ENCODE measurements at regions of chr14 and their contacts with region 1.

Region 1: GRCh38 chr14:73728717-73729330 is 14.6 kb upstream of the PNMA1 start:
- DNase-seq: peak; percentile 91 to 94 (median 91)
- H3K4me3 ChIP-seq: no peak overlapping the region
- H3K4me3 Mint-ChIP-seq: peak overlapping the region; percentile 20 to 69
- H3K27ac ChIP-seq: peak overlapping the region; percentile 22 to 35
- H3K27ac Mint-ChIP-seq: peak overlapping the region; percentile 75 to 93 (median 88)
- H3K4me1 ChIP-seq: peaks cover 39 to 51% of the 10 kb centered on the region in 2 donors
- H3K4me1 Mint-ChIP-seq: peaks cover 44% of the 10 kb centered on the region
- H3K27me3 ChIP-seq: no peaks in the 10 kb centered on the region
- H3K27me3 Mint-ChIP-seq: peaks cover 0 to 2% (median 0%) of the 10 kb centered on the region in 3 donors
- CTCF ChIP-seq: peak; percentile 93

Region 2: DNA sequence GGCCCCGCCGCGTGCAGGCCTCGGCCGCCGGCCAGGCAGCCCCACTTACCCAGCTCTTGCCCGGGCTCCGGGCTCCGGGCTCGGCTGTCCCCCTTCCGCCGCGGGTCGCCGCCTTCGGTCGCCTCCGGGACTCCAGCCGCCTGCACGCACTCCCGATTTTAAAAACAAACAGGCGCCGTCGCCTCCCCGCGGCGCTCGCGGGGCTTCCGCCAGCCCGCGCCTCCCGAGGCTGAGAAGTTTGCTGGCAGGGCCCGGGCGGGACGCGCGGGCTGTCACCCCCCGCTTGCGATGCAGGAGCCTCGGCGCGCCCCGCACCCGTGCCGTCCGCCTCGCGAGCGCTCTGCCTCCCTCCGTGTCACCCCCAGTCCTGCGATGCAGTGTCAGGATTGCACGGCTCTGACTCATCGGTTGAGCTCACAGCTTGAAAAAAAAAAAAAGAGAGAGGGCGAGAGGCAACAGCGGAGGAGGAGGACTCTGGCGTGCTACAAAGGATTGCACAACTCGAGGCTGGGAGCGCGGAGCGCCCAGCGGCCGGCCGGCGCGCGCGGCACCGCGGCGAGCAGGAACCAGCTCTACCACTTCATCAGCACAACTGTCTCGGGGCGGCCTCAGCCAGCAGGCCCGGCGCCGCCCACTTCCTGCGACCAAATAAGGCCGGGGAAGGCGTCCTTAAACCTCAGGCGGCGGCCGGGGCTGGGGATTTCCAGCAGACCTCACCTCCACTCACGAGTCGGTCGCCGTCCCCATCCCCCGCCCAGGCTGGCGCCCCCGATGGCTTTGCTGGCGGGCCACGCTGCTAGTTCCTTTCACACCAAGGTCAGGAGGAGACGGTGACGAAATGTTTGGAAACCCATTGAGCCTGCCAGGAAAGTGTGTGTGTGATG is 31.1 kb after region 1 on chr14:
- intact Hi-C with region 1: loop called in 1 of 2 experiments (anchors 5 kb)
- DNase-seq: peak; percentile 97 to 99 (median 98)
- H3K4me3 ChIP-seq: peak overlapping the region; percentile 25 to 77 (median 74)
- H3K4me3 Mint-ChIP-seq: peak overlapping the region; percentile 77 to 86
- H3K27ac ChIP-seq: peak overlapping the region; percentile 90 to 98
- H3K27ac Mint-ChIP-seq: peak overlapping the region; percentile 96 to 99 (median 98)
- H3K4me1 ChIP-seq: peaks cover 82 to 90% of the 10 kb centered on the region in 2 donors
- H3K4me1 Mint-ChIP-seq: peaks cover 83% of the 10 kb centered on the region
- H3K27me3 ChIP-seq: no peaks in the 10 kb centered on the region
- H3K27me3 Mint-ChIP-seq: peaks cover 0 to 2% (median 0%) of the 10 kb centered on the region in 3 donors
- CTCF ChIP-seq: no peak

Region 3: GRCh38 chr14:73886449-73887317 is 157.9 kb after region 1 on chr14 and contains the start of gene ZNF410:
- intact Hi-C with region 1: loop called in 1 of 2 experiments (anchors 2 kb)
- DNase-seq: peak; percentile 94 to 97 (median 95)
- H3K4me3 ChIP-seq: peak within 1 kb of the TSS; percentile 54 to 90 (median 73)
- H3K4me3 Mint-ChIP-seq: peak within 1 kb of the TSS; percentile 88 to 93
- H3K27ac ChIP-seq: peak within 1 kb of the TSS; percentile 89 to 94
- H3K27ac Mint-ChIP-seq: peak within 1 kb of the TSS; percentile 94 to 98 (median 97)
- H3K4me1 ChIP-seq: peaks cover 19 to 25% of the 10 kb centered on the region in 2 donors
- H3K4me1 Mint-ChIP-seq: peaks cover 31% of the 10 kb centered on the region
- H3K27me3 ChIP-seq: no peaks in the 10 kb centered on the region
- H3K27me3 Mint-ChIP-seq: peaks cover 0 to under 1% (median 0%) of the 10 kb centered on the region in 3 donors
- CTCF ChIP-seq: no peak
- polyA plus RNA-seq, gene ZNF410: 20.4 to 53.3 (median 42.5) TPM

Region 4: DNA sequence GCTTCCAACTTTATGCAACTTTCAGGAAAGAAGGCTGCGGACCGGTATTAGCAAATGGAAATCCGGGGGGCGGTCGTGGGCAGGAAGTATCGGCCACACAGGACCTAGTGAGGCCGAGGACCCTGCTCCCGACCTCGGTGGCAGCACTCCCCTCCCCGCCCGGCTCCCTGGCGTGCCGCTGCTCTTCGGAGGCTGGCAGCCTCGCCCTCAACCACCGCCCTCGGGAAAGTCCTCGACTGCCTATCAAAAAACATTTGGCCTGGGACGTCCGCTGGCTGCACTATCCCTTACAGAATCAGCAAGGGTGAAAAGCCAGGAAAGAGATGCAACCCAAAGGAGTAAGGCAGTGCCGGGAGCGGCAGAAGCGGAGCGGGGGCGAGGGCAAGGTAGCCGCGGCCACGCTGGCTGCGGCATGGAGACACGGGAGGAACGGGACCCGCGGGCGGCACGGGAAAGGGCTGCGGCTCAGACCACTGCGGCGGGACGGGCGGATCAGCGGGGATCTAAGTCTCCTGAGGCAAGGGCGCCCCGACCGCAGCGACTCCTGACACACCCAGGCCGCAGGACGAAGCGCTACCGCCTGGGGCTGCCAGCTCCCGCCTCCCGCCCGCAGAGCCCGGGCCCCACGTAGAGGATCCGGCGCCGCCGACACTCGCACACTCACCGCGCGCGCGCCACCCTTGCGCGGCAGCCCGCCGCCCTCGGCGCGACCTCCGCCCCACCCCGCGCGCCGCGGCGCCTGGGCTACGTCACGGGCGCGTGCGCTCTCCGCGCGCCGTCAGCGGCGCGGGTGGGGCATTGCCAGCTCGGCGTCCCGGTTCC is 290.0 kb after region 1 on chr14 and contains the starts of genes BBOF1 and ENTPD5:
- intact Hi-C with region 1: loop called in 1 of 2 experiments (anchors 10 kb)
- DNase-seq: peak; percentile 87 to 90 (median 90)
- H3K4me3 ChIP-seq: peak within 1 kb of the TSS; percentile 87 to 95 (median 88)
- H3K4me3 Mint-ChIP-seq: peak within 1 kb of the TSS; percentile 88 to 96
- H3K27ac ChIP-seq: peak within 1 kb of the TSS; percentile 93 to 97
- H3K27ac Mint-ChIP-seq: peak within 1 kb of the TSS; percentile 96 to 98 (median 97)
- H3K4me1 ChIP-seq: peaks cover 11 to 15% of the 10 kb centered on the region in 2 donors
- H3K4me1 Mint-ChIP-seq: peaks cover 13% of the 10 kb centered on the region
- H3K27me3 ChIP-seq: no peaks in the 10 kb centered on the region
- H3K27me3 Mint-ChIP-seq: no peaks in the 10 kb centered on the region
- CTCF ChIP-seq: no peak
- polyA plus RNA-seq, gene BBOF1: 0.01 to 0.94 TPM in 2 of 3 donors, not detected in the other
- polyA plus RNA-seq, gene ENTPD5: 2.3 to 4.3 (median 2.7) TPM

Region 5: DNA sequence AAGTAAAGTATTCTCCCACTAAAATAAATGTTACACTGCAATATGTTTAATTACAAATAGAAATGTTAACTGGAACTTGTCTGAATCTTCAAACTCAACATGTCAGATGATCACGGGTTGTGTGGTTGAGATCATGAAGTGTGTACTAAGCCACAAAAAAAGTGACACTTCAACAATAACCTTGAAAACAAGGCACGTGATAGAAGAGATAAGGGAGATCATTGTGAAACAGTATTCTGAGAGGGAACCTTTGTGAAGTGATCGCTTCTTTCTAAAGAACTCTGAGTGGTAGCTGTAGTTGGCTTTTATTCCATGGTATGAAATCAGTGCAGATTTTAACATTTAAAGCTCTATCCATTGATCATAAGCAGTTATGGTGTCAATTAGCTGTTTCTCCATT is 416.0 kb after region 1 on chr14:
- intact Hi-C with region 1: no loop called
- DNase-seq: no peak
- H3K4me3 ChIP-seq: no peak overlapping the region
- H3K4me3 Mint-ChIP-seq: no peak overlapping the region
- H3K27ac ChIP-seq: no peak overlapping the region
- H3K27ac Mint-ChIP-seq: no peak overlapping the region
- H3K4me1 ChIP-seq: no peaks in the 10 kb centered on the region
- H3K4me1 Mint-ChIP-seq: peaks cover 9% of the 10 kb centered on the region
- H3K27me3 ChIP-seq: no peaks in the 10 kb centered on the region
- H3K27me3 Mint-ChIP-seq: no peaks in the 10 kb centered on the region
- CTCF ChIP-seq: no peak